SK-N-SH (cell line): ENCODE measurements at regions of chr19 and their contacts with region 1.

Region 1: GRCh38 chr19:29761575-29762232 is 46.6 kb upstream of the C19orf12 start:
- DNase-seq: no peak
- H3K4me3 ChIP-seq: no peak overlapping the region
- H3K27ac ChIP-seq: no peak overlapping the region
- H3K4me1 ChIP-seq: no peaks in the 10 kb centered on the region; a peak in 1 of 4 replicates
- H3K27me3 ChIP-seq: no peaks in the 10 kb centered on the region
- CTCF ChIP-seq: no peak
- EP300 ChIP-seq: no peak
- RAD21 ChIP-seq: no peak

Region 2: DNA sequence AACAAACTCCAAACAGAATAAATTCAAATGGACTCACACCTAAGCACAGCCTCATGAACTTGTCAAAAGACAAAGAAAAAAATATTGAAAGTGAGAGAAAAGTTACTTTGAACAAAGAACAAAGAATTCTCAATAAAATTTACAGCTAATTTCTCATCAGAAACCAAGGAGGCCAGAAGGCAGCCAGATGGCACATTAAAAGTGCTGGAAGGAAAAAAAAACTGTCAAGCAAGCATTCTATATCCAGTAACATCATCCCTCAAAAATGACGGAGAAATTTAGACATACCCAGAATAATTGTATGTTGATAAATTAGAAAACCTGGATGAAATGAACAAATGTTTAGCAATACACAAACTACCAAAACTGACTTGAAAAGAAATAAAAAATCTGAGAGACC is 419.0 kb before region 1 on chr19:
- CTCF ChIA-PET with region 1: no interaction called
- POLR2A ChIA-PET with region 1: no interaction called
- DNase-seq: no peak
- H3K4me3 ChIP-seq: no peak overlapping the region
- H3K27ac ChIP-seq: no peak overlapping the region
- H3K4me1 ChIP-seq: no peaks in the 10 kb centered on the region
- H3K27me3 ChIP-seq: no peaks in the 10 kb centered on the region
- CTCF ChIP-seq: no peak
- EP300 ChIP-seq: no peak
- RAD21 ChIP-seq: no peak

Region 3: GRCh38 chr19:29737461-29738000 is 24.2 kb before region 1 on chr19:
- CTCF ChIA-PET with region 1: interaction called, 14 read pairs
- POLR2A ChIA-PET with region 1: no interaction called
- DNase-seq: no peak
- H3K4me3 ChIP-seq: no peak overlapping the region
- H3K27ac ChIP-seq: no peak overlapping the region
- H3K4me1 ChIP-seq: no peaks in the 10 kb centered on the region
- H3K27me3 ChIP-seq: peaks cover 7% of the 10 kb centered on the region; the same call in 1 of the 2 replicates
- CTCF ChIP-seq: no peak
- EP300 ChIP-seq: no peak
- RAD21 ChIP-seq: no peak

Region 4: DNA sequence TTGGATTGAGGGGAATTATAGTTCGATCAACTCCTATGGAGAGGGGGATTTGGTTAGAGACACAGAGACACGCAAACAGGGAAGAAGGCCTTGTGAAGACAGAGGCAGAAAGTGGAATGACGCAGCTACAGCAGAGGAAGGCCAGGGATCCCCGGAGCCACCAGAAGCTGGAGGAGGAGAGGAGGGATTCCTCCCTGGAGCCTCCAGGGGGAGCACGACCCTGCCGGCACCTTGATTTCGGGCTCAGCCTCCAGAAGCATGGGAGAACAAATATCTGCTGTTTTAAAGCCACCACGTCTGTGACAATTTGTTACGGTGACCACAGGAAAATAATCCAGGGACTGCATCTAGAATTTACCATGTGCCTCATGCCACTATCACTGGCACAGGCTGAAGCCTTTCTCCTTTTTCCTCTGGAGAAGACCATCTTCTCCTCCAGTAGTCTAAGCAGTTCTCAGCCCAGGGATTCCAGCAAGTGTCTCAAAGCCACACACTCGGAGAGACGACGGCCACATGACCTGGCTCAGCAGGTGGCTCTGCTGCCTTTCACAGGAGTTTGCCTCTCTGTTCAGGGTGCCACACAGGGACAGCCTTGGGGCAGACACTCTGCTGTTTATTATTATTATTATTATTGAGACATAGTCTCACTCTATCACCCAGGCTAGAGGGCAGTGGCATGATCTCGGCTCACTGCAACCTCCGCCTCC is 10.2 kb after region 1 on chr19:
- CTCF ChIA-PET with region 1: interaction called, 28 read pairs
- POLR2A ChIA-PET with region 1: no interaction called
- DNase-seq: peak; percentile 86
- H3K4me3 ChIP-seq: no peak overlapping the region
- H3K27ac ChIP-seq: no peak overlapping the region
- H3K4me1 ChIP-seq: peaks cover 0 to 6% of the 10 kb centered on the region in 2 experiments; a peak in 1 of 4 replicates
- H3K27me3 ChIP-seq: no peaks in the 10 kb centered on the region
- CTCF ChIP-seq: peak; percentile 70
- EP300 ChIP-seq: no peak
- RAD21 ChIP-seq: peak; percentile 70

Region 5: DNA sequence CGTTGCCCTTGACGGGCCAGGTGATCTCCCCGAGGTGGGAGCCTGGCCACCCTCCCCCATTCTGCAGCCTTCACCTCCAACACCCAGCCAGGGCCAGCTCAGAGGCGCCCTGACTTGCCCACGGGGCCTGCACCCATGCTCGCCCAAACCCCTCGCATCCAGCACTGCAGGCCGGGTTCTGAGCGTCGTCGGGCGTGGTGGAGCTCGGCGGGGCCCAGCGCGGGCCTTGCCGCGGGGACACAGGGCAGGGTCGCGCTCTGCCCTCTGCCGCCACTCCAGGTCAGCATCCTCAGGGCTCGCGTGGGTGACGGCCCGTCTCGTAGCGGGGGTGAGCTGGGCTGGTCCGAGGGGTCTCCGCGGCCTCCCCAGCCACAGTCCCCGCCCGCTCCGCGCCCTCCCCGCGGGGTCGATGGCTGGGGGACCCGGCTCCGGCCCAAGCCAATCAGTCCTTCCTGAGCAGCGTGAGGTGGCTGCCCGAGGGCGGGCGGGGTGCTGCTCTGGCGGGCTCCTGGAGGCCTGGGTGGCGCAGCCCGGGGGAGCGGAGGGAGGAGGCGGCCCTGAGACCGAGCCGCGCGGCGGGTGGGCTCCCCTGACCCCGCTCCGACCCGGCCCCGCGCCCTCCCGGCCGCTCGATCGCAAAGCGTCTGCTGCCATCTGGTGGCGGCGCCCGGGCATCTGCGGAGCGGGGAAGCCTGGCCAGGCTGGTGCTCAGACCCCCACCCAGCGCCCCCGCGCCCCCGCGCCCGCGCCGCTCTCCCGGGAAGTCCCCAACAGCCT is 111.5 kb after region 1 on chr19:
- CTCF ChIA-PET with region 1: interaction called, 57 read pairs
- POLR2A ChIA-PET with region 1: no interaction called
- DNase-seq: peak; percentile 96
- H3K4me3 ChIP-seq: peak overlapping the region; percentile 50 to 60
- H3K27ac ChIP-seq: no peak overlapping the region; a peak in 1 of 4 replicates
- H3K4me1 ChIP-seq: peaks cover 0 to 6% of the 10 kb centered on the region in 2 experiments; a peak in 1 of 4 replicates
- H3K27me3 ChIP-seq: no peaks in the 10 kb centered on the region
- CTCF ChIP-seq: peak; percentile 74
- EP300 ChIP-seq: no peak
- RAD21 ChIP-seq: peak; percentile 77